Mammary epithelial cell (primary cell): ENCODE measurements at regions of chr15 and their contacts with region 1.

Region 1: DNA sequence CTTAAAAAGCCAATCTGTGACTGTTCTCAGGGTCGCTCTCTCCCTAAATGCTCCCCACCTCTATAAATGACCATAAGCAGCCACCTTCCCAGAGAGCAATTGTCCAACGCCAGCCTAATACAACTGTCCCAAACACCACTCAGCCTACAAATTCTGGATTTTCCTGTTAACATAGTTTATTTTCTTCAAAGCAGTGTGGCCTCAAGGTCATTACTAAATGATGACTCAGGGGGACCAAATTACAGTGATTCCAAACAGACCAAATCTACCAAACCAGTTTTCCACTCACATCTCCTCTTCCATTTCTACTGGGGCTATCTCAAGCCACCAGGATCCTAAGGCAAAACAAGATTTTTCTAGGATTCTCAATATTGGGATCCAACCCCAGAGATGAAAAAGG is 22.5 kb downstream of the HEXA start:
- DNase-seq: peak; percentile 34
- H3K4me3 ChIP-seq: no peak overlapping the region
- H3K27ac ChIP-seq: no peak overlapping the region
- H3K4me1 ChIP-seq: peaks cover 8% of the 10 kb centered on the region
- H3K27me3 ChIP-seq: no peaks in the 10 kb centered on the region
- CTCF ChIP-seq: no peak

Region 2: DNA sequence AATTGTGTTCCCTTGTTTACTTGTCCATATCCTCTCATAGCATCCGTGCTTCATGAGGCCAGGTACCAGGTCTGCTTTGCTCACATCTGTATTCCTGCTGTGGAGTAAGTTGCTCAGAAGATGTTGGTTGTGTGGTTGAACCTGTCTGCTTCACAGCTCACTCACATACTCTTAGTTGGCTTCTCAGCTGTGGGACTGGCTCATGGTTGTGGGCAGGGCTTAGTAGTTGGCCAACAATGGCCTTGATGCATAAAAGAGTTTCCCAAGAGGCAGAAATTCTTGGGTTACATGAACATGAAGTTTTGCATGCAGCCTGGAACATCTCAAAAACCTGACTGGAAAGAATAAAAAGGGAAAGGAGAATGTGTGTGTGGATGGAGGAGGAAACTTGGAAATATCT is 50.3 kb before region 1 on chr15:
- CTCF ChIA-PET with region 1: no interaction called
- dilution Hi-C with region 1: no loop called
- in situ Hi-C with region 1: no loop called
- intact Hi-C with region 1: no loop called
- DNase-seq: no peak
- H3K4me3 ChIP-seq: no peak overlapping the region
- H3K27ac ChIP-seq: no peak overlapping the region
- H3K4me1 ChIP-seq: no peaks in the 10 kb centered on the region
- H3K27me3 ChIP-seq: no peaks in the 10 kb centered on the region
- CTCF ChIP-seq: no peak

Region 3: DNA sequence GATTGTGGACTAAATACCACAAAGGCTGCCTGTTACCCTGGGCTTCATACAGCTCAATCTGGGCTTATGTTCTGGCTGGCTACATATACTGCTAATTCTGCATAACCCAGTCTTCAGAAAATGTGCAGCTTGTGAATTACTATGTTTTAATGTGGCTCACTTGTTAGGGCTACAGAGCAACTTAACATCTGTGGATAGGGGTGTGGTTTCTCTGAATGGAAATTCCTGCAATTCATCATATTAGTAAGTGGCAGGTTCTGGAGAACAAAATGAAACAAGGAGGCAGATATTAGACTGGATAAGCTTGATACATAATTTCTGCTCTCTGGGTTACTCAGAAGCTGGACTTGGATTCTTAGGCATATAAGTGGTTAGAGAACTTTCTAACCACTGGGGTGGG is 51.6 kb after region 1 on chr15:
- CTCF ChIA-PET with region 1: no interaction called
- dilution Hi-C with region 1: loop called (anchors 5 kb)
- in situ Hi-C with region 1: no loop called
- intact Hi-C with region 1: no loop called
- DNase-seq: peak; percentile 37
- H3K4me3 ChIP-seq: no peak overlapping the region
- H3K27ac ChIP-seq: no peak overlapping the region
- H3K4me1 ChIP-seq: no peaks in the 10 kb centered on the region
- H3K27me3 ChIP-seq: no peaks in the 10 kb centered on the region
- CTCF ChIP-seq: no peak